ENCODE measurements at regions of chr11 and their contacts with region 1.

Region 1: DNA sequence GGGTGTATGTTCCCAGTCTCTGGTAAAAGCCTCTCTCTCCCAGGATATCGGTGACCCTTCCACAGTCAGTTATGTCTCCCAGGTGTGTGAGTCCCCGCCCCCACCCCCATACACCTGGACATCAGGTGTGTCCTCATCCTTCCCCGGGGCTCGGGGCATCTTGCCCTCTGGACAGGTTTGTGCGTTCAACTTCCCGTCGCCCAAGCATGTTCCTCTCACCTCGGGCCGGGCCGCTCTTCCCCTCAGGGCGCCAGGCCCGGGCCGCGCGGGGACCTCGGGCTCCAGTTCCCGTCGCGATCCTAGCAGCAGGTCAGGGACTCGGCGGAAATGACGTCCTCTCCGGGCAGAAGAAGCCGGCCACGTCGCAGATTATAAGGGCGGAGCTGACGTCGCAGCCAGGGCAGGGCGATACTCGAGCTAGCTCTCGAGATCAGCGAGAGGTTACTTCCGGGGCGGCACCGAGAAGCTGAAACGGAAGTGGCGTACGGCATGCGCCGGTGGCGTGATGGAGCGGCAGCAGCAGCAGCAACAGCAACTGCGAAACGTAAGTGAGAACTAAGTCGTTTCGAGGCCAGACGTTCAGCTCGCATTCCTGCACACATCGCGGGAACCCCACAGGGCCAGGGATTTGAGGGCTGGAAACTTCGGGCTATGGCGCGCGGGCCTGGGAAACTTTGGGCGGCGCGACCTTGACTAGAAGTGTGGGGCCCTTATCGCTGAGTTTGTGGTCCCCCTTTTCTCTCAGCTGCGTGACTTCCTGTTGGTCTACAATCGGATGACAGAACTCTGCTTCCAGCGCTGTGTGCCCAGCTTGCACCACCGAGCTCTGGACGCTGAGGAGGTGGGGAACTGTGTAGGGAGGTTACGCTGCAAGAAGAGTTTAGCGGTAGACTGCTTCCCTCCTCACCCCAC is at the starts of genes ARFIP2 and TIMM10B:
- DNase-seq: peak; percentile 99
- ATAC-seq: peak; percentile 98 to 99 (median 98)
- H3K4me3 ChIP-seq: peak within 1 kb of the TSS; percentile 54 to 93 (median 80)
- H3K27ac ChIP-seq: peak within 1 kb of the TSS; percentile 37 to 96 (median 90)
- H3K4me1 ChIP-seq: peaks cover 3 to 37% (median 25%) of the 10 kb centered on the region in 12 donors
- H3K27me3 ChIP-seq: no peaks in the 10 kb centered on the region
- CTCF ChIP-seq: no peak
- POLR2A ChIP-seq: peak; percentile 70 to 88
- total RNA-seq, gene ARFIP2: 10.7 to 24.9 (median 18.9) TPM
- total RNA-seq, gene TIMM10B: 13.2 to 26.9 (median 16.1) TPM

Region 2: GRCh38 chr11:5865826-5866225 is 615.4 kb before region 1 on chr11:
- intact Hi-C with region 1: no loop called
- DNase-seq: no peak
- ATAC-seq: no peak
- H3K4me3 ChIP-seq: no peak overlapping the region
- H3K27ac ChIP-seq: no peak overlapping the region
- H3K4me1 ChIP-seq: no peaks in the 10 kb centered on the region
- H3K27me3 ChIP-seq: no peaks in the 10 kb centered on the region
- CTCF ChIP-seq: no peak
- POLR2A ChIP-seq: no peak

Region 3: DNA sequence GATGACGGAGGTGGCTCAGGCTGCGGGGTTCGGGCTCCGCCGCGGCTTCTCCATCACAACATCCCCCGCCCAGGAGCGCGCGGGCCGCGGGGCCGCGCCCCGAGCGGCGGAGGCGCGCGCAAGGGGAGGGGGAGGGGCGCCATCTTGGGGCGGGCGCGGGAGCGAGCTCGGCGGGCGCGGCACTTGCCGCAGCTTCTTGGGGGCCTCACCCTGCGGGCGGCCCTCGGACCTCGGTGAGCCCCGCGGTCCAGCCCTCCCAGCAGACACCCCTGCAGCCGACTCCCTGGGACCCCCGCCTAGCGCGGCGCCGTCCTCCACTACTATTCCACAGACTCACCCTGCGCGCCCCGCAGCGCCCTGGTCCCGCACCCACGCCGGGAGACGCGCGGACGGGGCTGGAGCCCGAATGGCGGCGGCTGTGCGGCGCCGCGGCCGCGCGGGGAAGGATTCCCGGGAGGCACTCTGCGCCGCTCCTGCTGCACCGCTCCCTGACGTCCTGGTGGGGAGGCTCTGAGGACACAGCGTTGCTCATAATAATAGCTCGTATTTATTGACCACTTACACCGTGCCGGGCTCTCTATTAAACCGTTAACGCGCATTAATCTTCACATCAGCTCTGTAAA is 62.1 kb before region 1 on chr11 and contains the start of gene APBB1:
- intact Hi-C with region 1: loop called in 1 of 10 experiments (anchors 5 kb)
- DNase-seq: peak; percentile 65 to 85 (median 78)
- ATAC-seq: peak; percentile 68 to 97 (median 90)
- H3K4me3 ChIP-seq: peak within 1 kb of the TSS; percentile 74 to 100 (median 94)
- H3K27ac ChIP-seq: peak within 1 kb of the TSS; percentile 89 to 99 (median 94)
- H3K4me1 ChIP-seq: peaks cover 0 to 40% (median 14%) of the 10 kb centered on the region in 12 donors
- H3K27me3 ChIP-seq: peaks cover 0 to 9% (median 0%) of the 10 kb centered on the region in 9 donors
- CTCF ChIP-seq: peak in 5 of 12 donors; percentile 8 to 20 (median 16)
- POLR2A ChIP-seq: peak; percentile 1 to 75
- total RNA-seq, gene APBB1: 50.3 to 101 (median 83.5) TPM

Region 4: DNA sequence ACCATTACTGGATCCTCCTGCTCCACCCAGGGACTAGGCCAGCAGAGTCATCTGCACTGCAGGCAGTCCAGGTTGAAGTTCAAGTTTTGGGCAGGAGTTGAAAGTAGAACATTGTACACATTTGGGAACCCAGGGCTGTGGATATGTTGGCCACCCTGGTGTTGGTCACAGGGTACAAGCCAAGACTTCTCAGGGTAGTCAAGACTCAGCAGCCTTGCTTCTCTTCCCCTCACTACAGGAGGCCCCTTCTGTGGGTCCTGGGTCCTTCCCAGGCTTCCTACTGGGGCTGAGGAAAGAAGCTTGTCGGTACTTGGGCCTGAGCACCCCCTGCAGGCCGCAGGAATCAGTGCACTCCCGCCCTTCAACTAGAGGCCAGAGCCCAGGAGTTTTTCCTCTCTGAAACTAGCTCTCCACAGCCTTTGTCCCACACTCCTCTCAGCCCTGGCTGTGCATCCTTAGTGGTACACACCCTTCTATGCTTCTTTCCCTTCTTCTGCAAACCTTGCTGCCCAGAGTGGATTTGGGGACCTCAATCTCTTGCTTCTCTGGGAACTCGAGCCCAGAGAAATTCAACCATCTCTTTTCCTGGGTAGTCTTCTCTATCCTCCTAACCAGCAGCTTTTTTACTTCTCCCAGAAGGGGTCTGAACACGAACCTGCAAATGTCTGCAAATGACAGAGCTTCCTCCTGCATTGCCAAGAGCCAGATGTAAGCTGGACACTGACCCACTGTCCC is 37.8 kb before region 1 on chr11:
- intact Hi-C with region 1: no loop called
- DNase-seq: peak; percentile 40 to 70 (median 44)
- ATAC-seq: peak in 3 of 4 donors; percentile 81 to 87 (median 83)
- H3K4me3 ChIP-seq: no peak overlapping the region
- H3K27ac ChIP-seq: no peak overlapping the region
- H3K4me1 ChIP-seq: peaks cover 0 to 5% (median 0%) of the 10 kb centered on the region in 12 donors
- H3K27me3 ChIP-seq: no peaks in the 10 kb centered on the region
- CTCF ChIP-seq: peak; percentile 66 to 90 (median 80)
- POLR2A ChIP-seq: no peak

Measured in heart left ventricle (tissue), 16 donors.